ENCODE measurements at regions of chr3 and their contacts with region 1.

Region 1: GRCh38 chr3:177359593-177360357 is 162.5 kb upstream of the TBL1XR1 start:
- DNase-seq: peak; percentile 87
- ATAC-seq: peak; percentile 82
- H3K4me3 ChIP-seq: peak overlapping the region; percentile 52; the same call in 1 of the 2 replicates
- H3K27ac ChIP-seq: peak overlapping the region; percentile 81
- H3K4me1 ChIP-seq: peaks cover 33% of the 10 kb centered on the region
- H3K27me3 ChIP-seq: no peaks in the 10 kb centered on the region
- CTCF ChIP-seq: peak in 2 of 3 experiments; percentile 5 to 32; a peak in 2 of 6 replicates
- EP300 ChIP-seq: peak; percentile 81 to 96; a peak in 3 of 4 replicates
- POLR2A ChIP-seq: peak; percentile 47; the same call in 1 of the 2 replicates
- RAD21 ChIP-seq: peak; percentile 61

Region 2: GRCh38 chr3:176075491-176075890 is 1284.3 kb before region 1 on chr3:
- CTCF ChIA-PET with region 1: no interaction called
- POLR2A ChIA-PET with region 1: no interaction called
- RAD21 ChIA-PET with region 1: no interaction called
- SMC1A ChIA-PET with region 1: no interaction called
- in situ Hi-C with region 1: no loop called
- intact Hi-C with region 1: no loop called
- DNase-seq: no peak
- ATAC-seq: no peak
- H3K4me3 ChIP-seq: no peak overlapping the region
- H3K27ac ChIP-seq: no peak overlapping the region
- H3K4me1 ChIP-seq: no peaks in the 10 kb centered on the region
- H3K27me3 ChIP-seq: no peaks in the 10 kb centered on the region
- CTCF ChIP-seq: no peak
- EP300 ChIP-seq: no peak
- POLR2A ChIP-seq: no peak
- RAD21 ChIP-seq: no peak

Region 3: GRCh38 chr3:177197041-177197727 is 162.6 kb before region 1 on chr3 and contains the start of gene TBL1XR1:
- CTCF ChIA-PET with region 1: interaction called, 4 read pairs
- POLR2A ChIA-PET with region 1: interaction called, 7 read pairs
- RAD21 ChIA-PET with region 1: interaction called, 23 read pairs
- SMC1A ChIA-PET with region 1: interaction called, 15 read pairs
- in situ Hi-C with region 1: loop called (anchors 5 kb)
- intact Hi-C with region 1: loop called (anchors 1 kb)
- DNase-seq: no peak
- ATAC-seq: peak; percentile 16
- H3K4me3 ChIP-seq: peak within 1 kb of the TSS; percentile 99
- H3K27ac ChIP-seq: peak within 1 kb of the TSS; percentile 97
- H3K4me1 ChIP-seq: peaks cover 13% of the 10 kb centered on the region
- H3K27me3 ChIP-seq: no peaks in the 10 kb centered on the region
- CTCF ChIP-seq: no peak
- EP300 ChIP-seq: no peak
- POLR2A ChIP-seq: peak; percentile 69
- RAD21 ChIP-seq: peak; percentile 28
- polyA plus RNA-seq, gene TBL1XR1: 13.0 to 77.5 TPM

Region 4: GRCh38 chr3:177314897-177315296 is 44.9 kb before region 1 on chr3:
- CTCF ChIA-PET with region 1: no interaction called
- POLR2A ChIA-PET with region 1: no interaction called
- RAD21 ChIA-PET with region 1: interaction called, 5 read pairs
- SMC1A ChIA-PET with region 1: no interaction called
- in situ Hi-C with region 1: no loop called
- intact Hi-C with region 1: loop called (anchors 2 kb)
- DNase-seq: no peak
- ATAC-seq: peak; percentile 73
- H3K4me3 ChIP-seq: no peak overlapping the region
- H3K27ac ChIP-seq: peak overlapping the region; percentile 9; the same call in 1 of the 2 replicates
- H3K4me1 ChIP-seq: peaks cover 9% of the 10 kb centered on the region
- H3K27me3 ChIP-seq: no peaks in the 10 kb centered on the region
- CTCF ChIP-seq: no peak
- EP300 ChIP-seq: no peak; a peak in 1 of 4 replicates
- POLR2A ChIP-seq: no peak
- RAD21 ChIP-seq: no peak

Region 5: GRCh38 chr3:177378168-177378567 is 18.4 kb after region 1 on chr3:
- CTCF ChIA-PET with region 1: no interaction called
- POLR2A ChIA-PET with region 1: interaction called, 5 read pairs
- RAD21 ChIA-PET with region 1: interaction called, 4 read pairs
- SMC1A ChIA-PET with region 1: interaction called, 6 read pairs
- in situ Hi-C with region 1: no loop called
- intact Hi-C with region 1: loop called (anchors 2 kb)
- DNase-seq: peak; percentile 71
- ATAC-seq: peak; percentile 90
- H3K4me3 ChIP-seq: no peak overlapping the region
- H3K27ac ChIP-seq: peak overlapping the region; percentile 74
- H3K4me1 ChIP-seq: peaks cover 18% of the 10 kb centered on the region
- H3K27me3 ChIP-seq: no peaks in the 10 kb centered on the region
- CTCF ChIP-seq: no peak
- EP300 ChIP-seq: peak in 1 of 2 experiments; percentile 52; a peak in 1 of 4 replicates
- POLR2A ChIP-seq: no peak
- RAD21 ChIP-seq: no peak

Region 6: GRCh38 chr3:177777699-177778098 is 417.9 kb after region 1 on chr3:
- CTCF ChIA-PET with region 1: no interaction called
- POLR2A ChIA-PET with region 1: no interaction called
- RAD21 ChIA-PET with region 1: no interaction called
- SMC1A ChIA-PET with region 1: no interaction called
- in situ Hi-C with region 1: no loop called
- intact Hi-C with region 1: loop called (anchors 5 kb)
- DNase-seq: peak; percentile 20
- ATAC-seq: peak; percentile 97
- H3K4me3 ChIP-seq: no peak overlapping the region
- H3K27ac ChIP-seq: no peak overlapping the region
- H3K4me1 ChIP-seq: no peaks in the 10 kb centered on the region; the same call in 1 of the 2 replicates
- H3K27me3 ChIP-seq: no peaks in the 10 kb centered on the region
- CTCF ChIP-seq: peak; percentile 74 to 80 (median 78)
- EP300 ChIP-seq: no peak
- POLR2A ChIP-seq: no peak
- RAD21 ChIP-seq: peak; percentile 87